Activated naive CD8-positive, alpha-beta T cell treated with anti-CD3 and anti-CD28 coated beads, Interleukin-2, amount 10 ng/mL, durations not matched to agents 7 days and 5 days (primary cell): ENCODE measurements at regions of chr5 and their contacts with region 1.

Region 1: GRCh38 chr5:78467752-78468357 is 107.4 kb downstream of the SCAMP1 start:
- DNase-seq: no peak
- ATAC-seq: peak; percentile 45
- H3K4me3 Mint-ChIP-seq: no peak overlapping the region
- H3K27ac Mint-ChIP-seq: no peak overlapping the region
- H3K4me1 Mint-ChIP-seq: peaks cover 1% of the 10 kb centered on the region
- H3K27me3 Mint-ChIP-seq: no peaks in the 10 kb centered on the region

Region 2: GRCh38 chr5:78416677-78417425 is 51.0 kb before region 1 on chr5:
- POLR2A ChIA-PET with region 1: no interaction called
- DNase-seq: no peak
- ATAC-seq: no peak
- H3K4me3 Mint-ChIP-seq: no peak overlapping the region
- H3K27ac Mint-ChIP-seq: no peak overlapping the region
- H3K4me1 Mint-ChIP-seq: no peaks in the 10 kb centered on the region
- H3K27me3 Mint-ChIP-seq: no peaks in the 10 kb centered on the region

Region 3: GRCh38 chr5:78447775-78448424 is 20.0 kb before region 1 on chr5:
- POLR2A ChIA-PET with region 1: interaction called, 16 read pairs
- DNase-seq: no peak
- ATAC-seq: no peak
- H3K4me3 Mint-ChIP-seq: no peak overlapping the region
- H3K27ac Mint-ChIP-seq: no peak overlapping the region
- H3K4me1 Mint-ChIP-seq: no peaks in the 10 kb centered on the region
- H3K27me3 Mint-ChIP-seq: no peaks in the 10 kb centered on the region